ENCODE measurements at regions of chr9 and their contacts with region 1.

Region 1: GRCh38 chr9:38362852-38363593 is 29.5 kb upstream of the ALDH1B1 start:
- DNase-seq: no peak

Region 2: DNA sequence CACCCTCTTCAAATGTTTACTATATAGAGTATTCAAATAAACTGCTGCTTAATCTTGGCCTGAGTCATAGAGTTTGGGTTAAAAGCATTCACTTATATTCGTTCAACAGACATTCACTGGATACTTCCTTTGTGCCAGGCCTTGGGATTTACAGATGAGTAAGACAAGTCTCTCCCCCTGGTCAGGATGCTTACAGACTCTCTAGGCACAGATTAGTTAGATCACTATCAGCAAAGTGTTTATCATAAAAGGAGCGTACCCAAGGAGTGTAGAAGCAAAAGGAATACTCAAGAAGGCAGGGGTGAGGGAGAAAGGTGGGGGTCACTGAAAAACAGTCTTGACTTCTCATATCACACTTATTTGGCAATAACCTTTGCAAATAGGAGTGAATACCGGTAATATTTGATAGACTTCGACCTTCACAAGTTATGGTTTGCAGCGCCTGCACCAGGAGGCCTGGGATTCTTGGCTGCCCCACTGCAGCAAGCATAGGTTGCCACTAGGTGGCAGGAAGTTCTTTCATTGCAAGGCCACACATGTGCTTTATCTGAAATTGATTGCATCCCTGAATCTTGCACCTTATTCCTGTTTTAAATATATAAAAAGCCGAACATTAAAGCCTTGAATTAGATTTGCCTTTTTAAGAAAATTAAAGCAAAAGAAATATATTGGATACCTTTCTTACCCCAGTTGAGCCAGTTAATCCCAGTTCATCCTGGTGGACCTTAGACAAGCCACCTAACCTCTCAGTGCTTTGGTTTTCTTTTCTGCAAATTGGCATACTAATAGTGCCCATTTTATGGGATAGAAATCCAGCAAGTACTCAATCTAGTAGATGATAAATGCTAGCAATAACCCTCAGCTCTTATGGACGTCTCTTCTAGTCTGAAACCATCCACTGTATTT is 615.9 kb before region 1 on chr9:
- intact Hi-C with region 1: loop called in 1 of 2 experiments (anchors 10 kb)
- DNase-seq: no peak

Region 3: GRCh38 chr9:37913480-37914153 is 449.4 kb before region 1 on chr9:
- intact Hi-C with region 1: loop called (anchors 5 kb)
- DNase-seq: peak; percentile 92

Region 4: DNA sequence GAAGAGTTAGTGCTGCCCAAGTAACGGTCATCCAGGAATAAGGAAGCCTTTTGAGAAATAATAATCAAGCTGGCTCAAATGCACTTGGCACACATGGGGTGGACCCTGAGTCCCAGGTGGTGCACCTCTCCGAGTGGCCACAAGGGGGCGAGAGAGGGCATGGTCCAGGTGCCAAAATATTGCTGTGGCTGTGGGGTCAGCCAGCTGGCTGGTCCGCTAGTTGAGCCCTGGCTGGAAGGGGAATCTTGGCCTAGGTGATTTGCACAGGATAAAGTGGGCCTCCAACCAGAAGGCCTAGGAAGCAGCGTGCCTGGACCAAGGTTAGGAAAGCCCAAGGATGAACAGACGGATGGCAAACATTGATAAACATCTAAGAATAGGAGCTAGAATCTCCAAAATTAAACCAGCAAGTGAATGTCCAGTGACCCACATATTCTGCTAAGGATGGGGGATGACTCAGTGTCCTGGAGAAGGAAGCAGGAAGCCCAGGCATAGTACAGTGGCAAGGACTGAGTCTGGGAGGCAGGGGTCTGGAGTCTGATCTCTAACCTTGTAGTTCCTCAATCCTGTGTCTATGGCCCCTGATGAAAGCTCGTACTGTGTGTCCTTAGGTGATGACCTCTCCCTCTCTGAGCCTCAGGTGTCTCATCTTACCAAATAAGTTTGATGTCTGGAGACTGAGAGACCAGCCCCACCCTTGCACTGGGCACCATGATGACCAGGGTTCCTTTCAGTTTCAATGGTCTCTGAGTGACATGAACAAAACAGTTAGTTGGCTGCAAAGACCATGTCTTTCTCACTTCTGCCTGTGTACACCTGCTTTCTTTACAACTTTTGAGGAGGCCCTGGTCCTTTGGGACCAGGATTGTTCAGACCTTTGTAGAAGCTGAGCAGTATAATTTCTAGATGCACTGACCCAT is 274.8 kb before region 1 on chr9:
- intact Hi-C with region 1: loop called in 1 of 2 experiments (anchors 10 kb)
- DNase-seq: peak; percentile 94

Region 5: GRCh38 chr9:38183994-38184568 is 178.9 kb before region 1 on chr9:
- intact Hi-C with region 1: loop called in 1 of 2 experiments (anchors 5 kb)
- DNase-seq: no peak

Region 6: DNA sequence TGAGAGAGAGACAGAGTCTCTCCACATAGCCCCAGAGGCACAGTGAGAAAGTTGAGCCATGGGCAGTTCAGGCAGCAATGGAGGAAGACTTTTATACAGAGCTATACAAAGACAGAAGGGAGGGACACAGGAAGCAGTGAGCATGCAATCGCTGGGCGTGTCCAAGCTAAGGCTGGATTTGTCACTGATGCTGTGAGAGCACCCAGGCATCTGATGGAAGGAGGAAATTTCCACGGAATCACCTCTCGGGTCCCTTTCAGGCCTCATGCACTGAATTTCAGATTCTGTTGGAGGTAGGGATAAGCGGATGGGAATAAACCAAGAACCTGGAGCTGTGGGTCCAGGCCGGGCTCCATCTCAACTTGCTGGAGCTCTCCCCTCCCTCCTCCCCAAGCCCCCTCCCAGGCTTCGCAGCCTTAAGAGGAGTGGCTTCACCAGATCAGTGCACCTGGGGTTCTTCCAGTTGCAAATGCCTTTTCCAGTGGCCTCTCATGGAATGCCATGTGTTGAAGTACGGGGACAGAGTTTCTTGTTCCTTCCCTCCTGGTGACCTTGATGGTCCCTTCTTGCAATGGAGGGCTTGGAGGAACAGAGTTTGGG is 85.3 kb before region 1 on chr9:
- intact Hi-C with region 1: no loop called
- DNase-seq: no peak

Region 7: GRCh38 chr9:38316166-38316780 is 46.8 kb before region 1 on chr9:
- intact Hi-C with region 1: loop called in 1 of 2 experiments (anchors 1 kb)
- DNase-seq: no peak

Measured in posterior vena cava (tissue), 2 donors.